Dorsolateral prefrontal cortex (tissue), 120 donors: ENCODE measurements at regions of chr9 and their contacts with region 1.

Region 1: GRCh38 chr9:38010918-38011704 is 57.9 kb downstream of the SHB start:
- DNase-seq: no peak
- H3K4me3 ChIP-seq: no peak overlapping the region
- H3K27ac ChIP-seq: peak overlapping the region in 6 of 59 donors; percentile 3 to 56 (median 26)
- H3K27me3 ChIP-seq: no peaks in the 10 kb centered on the region
- CTCF ChIP-seq: no peak

Region 2: GRCh38 chr9:37540634-37541033 is 470.5 kb before region 1 on chr9:
- intact Hi-C with region 1: no loop called
- DNase-seq: peak in 4 of 10 donors; percentile 16 to 67 (median 44)
- H3K4me3 ChIP-seq: no peak overlapping the region
- H3K27ac ChIP-seq: no peak overlapping the region
- H3K27me3 ChIP-seq: no peaks in the 10 kb centered on the region
- CTCF ChIP-seq: no peak

Region 3: GRCh38 chr9:37929441-37929895 is 81.6 kb before region 1 on chr9:
- intact Hi-C with region 1: no loop called
- DNase-seq: no peak
- H3K4me3 ChIP-seq: no peak overlapping the region
- H3K27ac ChIP-seq: peak overlapping the region in 12 of 59 donors; percentile 21 to 78 (median 48)
- H3K27me3 ChIP-seq: no peaks in the 10 kb centered on the region
- CTCF ChIP-seq: no peak

Region 4: GRCh38 chr9:38160613-38161215 is 149.6 kb after region 1 on chr9:
- intact Hi-C with region 1: loop called in 1 of 2 experiments (anchors 5 kb)
- DNase-seq: peak in 5 of 10 donors; percentile 16 to 58 (median 24)
- H3K4me3 ChIP-seq: no peak overlapping the region
- H3K27ac ChIP-seq: no peak overlapping the region
- H3K27me3 ChIP-seq: no peaks in the 10 kb centered on the region
- CTCF ChIP-seq: peak; percentile 25 to 82 (median 72)